Transverse colon (tissue), 4 donors: ENCODE measurements at regions of chr16 and their contacts with region 1.

Region 1: GRCh38 chr16:84754353-84754856 is 54.6 kb downstream of the USP10 start:
- DNase-seq: peak; percentile 71
- H3K4me3 ChIP-seq: no peak overlapping the region
- H3K27ac ChIP-seq: peak overlapping the region in 2 of 4 donors; percentile 41 to 64
- H3K4me1 ChIP-seq: peaks cover 6 to 54% (median 28%) of the 10 kb centered on the region in 4 donors
- H3K27me3 ChIP-seq: no peaks in the 10 kb centered on the region
- CTCF ChIP-seq: peak; percentile 81 to 93 (median 83)
- EP300 ChIP-seq: no peak
- POLR2A ChIP-seq: no peak

Region 2: DNA sequence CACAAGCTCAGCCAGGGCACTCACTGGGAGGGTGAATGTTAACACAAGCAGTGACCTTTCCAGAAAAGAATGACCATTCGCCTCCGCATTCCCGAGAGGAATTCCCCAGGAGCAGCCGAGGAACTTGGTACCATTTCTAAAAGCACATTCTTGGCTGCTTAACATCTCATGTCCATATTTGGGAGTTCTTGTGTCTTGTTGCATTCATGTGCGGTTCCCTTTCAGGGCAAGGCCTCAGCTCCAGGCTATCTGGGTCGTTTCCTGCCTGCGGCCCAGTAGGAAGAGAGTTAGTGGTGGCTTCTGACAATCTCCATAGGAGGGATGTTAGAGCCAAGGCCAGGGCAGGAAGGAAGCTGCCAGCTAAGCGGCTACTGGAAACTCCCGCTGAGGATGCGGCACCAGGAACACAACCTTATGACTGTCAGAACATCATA is 222.1 kb before region 1 on chr16:
- in situ Hi-C with region 1: no loop called
- intact Hi-C with region 1: no loop called
- DNase-seq: peak; percentile 24
- H3K4me3 ChIP-seq: no peak overlapping the region
- H3K27ac ChIP-seq: peak overlapping the region; percentile 66 to 78 (median 70)
- H3K4me1 ChIP-seq: peaks cover 0 to 25% (median 11%) of the 10 kb centered on the region in 4 donors
- H3K27me3 ChIP-seq: no peaks in the 10 kb centered on the region
- CTCF ChIP-seq: no peak
- EP300 ChIP-seq: no peak
- POLR2A ChIP-seq: no peak

Region 3: DNA sequence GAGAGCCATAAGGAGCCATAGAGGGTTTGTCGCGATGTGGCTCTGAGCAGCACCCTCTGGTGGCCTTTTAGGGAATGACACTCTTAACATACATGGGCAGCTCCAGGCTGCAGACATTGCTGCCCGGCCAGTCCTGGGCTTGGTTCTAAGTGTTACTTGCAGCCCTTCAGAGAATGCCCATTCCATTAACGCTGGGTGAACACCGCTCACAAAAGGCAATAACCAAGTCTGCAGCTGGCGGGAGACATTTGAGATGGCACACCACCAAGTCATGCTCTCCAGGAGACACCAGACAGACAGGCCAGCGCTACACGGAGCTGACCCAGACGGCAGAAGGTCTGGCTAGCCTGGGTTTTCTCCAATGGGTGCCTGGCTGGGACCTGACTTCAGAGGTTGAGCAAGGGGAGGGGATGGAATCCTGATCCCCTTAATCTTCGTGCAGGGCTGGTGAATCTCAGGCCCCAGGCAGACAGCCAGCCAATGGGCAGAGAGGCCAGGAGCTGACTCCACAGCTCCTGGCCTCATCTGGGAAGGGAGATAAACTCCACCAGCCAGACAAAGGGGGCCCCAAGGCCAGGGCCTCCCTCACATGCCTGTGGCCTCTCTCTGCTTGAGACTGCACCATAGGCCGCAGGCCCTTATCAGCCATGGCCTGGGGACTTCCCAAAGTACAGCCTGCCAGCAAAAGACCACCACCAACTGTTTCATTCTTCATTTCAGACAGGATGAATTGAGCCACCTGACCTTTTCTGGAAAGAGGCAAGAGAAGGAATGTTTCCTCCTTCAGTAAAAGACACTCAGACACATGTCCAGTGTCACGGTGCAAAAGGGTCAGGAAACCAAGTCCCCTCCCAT is 198.2 kb after region 1 on chr16:
- in situ Hi-C with region 1: no loop called
- intact Hi-C with region 1: loop called (anchors 5 kb)
- DNase-seq: peak; percentile 83
- H3K4me3 ChIP-seq: no peak overlapping the region
- H3K27ac ChIP-seq: peak overlapping the region; percentile 19 to 74 (median 48)
- H3K4me1 ChIP-seq: peaks cover 4 to 14% (median 9%) of the 10 kb centered on the region in 4 donors
- H3K27me3 ChIP-seq: no peaks in the 10 kb centered on the region
- CTCF ChIP-seq: peak; percentile 91 to 95 (median 92)
- EP300 ChIP-seq: no peak
- POLR2A ChIP-seq: no peak

Region 4: DNA sequence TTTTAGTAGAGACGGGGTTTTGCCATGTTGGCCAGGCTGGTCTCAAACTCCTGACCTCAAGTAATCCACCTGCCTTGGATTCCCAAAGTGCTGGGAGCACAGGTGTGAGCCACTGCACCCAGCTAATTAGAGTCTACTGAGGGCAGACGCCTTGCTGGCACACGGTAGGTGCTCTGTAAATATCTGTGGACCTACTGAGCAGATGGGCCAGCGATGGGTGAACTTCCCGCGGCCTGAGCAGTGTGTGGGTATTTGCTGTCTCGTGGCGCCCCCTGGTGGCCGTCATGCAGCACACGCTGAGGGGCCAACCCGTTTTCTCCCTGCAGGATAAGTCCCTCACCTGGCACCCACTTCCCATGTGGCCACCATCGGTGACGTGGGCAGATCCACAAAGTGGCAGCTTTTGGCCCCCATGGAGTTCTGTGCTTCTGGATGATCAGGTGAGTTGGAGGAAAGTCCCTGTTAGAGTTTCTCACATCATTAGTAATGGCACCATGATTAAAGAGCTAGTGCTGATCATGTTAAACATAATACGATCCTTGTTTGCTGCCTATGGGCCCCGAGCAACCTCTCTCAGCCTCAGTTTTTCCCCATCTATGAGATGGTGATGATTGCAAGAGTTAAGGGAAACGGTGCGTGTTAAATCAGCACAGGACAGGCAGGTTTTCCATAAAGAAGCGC is 216.2 kb after region 1 on chr16:
- in situ Hi-C with region 1: loop called (anchors 5 to 10 kb)
- intact Hi-C with region 1: loop called (anchors 5 kb)
- DNase-seq: peak; percentile 82
- H3K4me3 ChIP-seq: no peak overlapping the region
- H3K27ac ChIP-seq: no peak overlapping the region
- H3K4me1 ChIP-seq: peaks cover 0 to 10% (median 7%) of the 10 kb centered on the region in 4 donors
- H3K27me3 ChIP-seq: no peaks in the 10 kb centered on the region
- CTCF ChIP-seq: peak; percentile 95 to 98 (median 96)
- EP300 ChIP-seq: no peak
- POLR2A ChIP-seq: no peak